CD4-positive, alpha-beta memory T cell (primary cell): ENCODE measurements at regions of chr17 and their contacts with region 1.

Region 1: DNA sequence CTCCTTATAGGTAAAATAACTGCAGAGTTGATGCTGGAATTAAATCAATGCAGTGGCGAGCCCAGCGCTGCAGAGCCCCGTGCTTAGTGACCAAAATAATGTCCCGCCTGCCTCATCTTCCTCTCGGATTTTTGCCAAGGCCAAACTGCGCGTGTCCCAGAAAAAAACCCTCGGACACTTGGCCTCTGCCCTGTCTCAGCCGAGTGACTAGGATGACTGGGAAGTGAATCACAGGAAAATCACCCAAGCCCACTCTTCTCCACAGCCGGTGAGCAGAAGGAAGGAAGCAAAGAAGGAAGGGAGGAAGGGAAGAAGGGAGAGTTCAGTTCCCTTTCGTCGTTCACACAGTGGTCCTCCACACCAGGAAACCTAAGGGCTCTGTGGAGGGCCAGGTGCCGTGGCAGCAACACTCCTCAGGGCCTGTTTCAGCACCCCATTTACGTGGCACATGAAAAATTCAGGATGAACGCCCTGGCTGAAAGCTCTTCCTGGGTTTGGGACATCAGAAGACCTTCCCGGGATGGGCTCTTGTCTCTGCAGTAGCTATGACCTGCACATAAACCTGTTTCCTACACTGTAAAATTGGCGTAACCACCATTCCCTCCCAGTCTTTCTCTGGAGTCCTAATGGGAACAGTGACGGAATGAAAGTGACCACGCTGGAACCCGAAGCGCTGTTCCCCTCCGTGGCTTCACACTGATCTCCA is 25.4 kb upstream of the HOXB13 start:
- DNase-seq: no peak
- H3K4me3 ChIP-seq: no peak overlapping the region
- H3K4me3 Mint-ChIP-seq: peak overlapping the region in 6 of 8 donors; percentile 1 to 70 (median 19)
- H3K27ac ChIP-seq: no peak overlapping the region
- H3K27ac Mint-ChIP-seq: peak overlapping the region in 3 of 7 donors; percentile 8 to 58 (median 51)
- H3K4me1 ChIP-seq: peaks cover 17% of the 10 kb centered on the region
- H3K4me1 Mint-ChIP-seq: peaks cover 0 to 30% (median 21%) of the 10 kb centered on the region in 4 donors
- H3K27me3 ChIP-seq: peaks cover 79% of the 10 kb centered on the region
- H3K27me3 Mint-ChIP-seq: peaks cover 72 to 74% of the 10 kb centered on the region in 2 donors

Region 2: GRCh38 chr17:48610282-48611211 is 143.4 kb before region 1 on chr17 and contains the start of gene HOXB7:
- CTCF ChIA-PET with region 1: no interaction called
- POLR2A ChIA-PET with region 1: no interaction called
- intact Hi-C with region 1: no loop called
- DNase-seq: peak in 2 of 5 donors; percentile 50 to 56
- H3K4me3 ChIP-seq: peak within 1 kb of the TSS; percentile 64 to 76
- H3K4me3 Mint-ChIP-seq: peak within 1 kb of the TSS; percentile 86 to 93 (median 90)
- H3K27ac ChIP-seq: no peak within 1 kb of the TSS
- H3K27ac Mint-ChIP-seq: peak within 1 kb of the TSS in 6 of 7 donors; percentile 13 to 93 (median 69)
- H3K4me1 ChIP-seq: peaks cover 51% of the 10 kb centered on the region
- H3K4me1 Mint-ChIP-seq: peaks cover 23 to 49% (median 34%) of the 10 kb centered on the region in 4 donors
- H3K27me3 ChIP-seq: peaks cover 47% of the 10 kb centered on the region
- H3K27me3 Mint-ChIP-seq: peaks cover 35 to 65% of the 10 kb centered on the region in 2 donors
- total RNA-seq, gene HOXB7: 0.25 TPM in 1 of 2 experiments, not detected in the other

Region 3: GRCh38 chr17:48718761-48719641 is 34.9 kb before region 1 on chr17:
- CTCF ChIA-PET with region 1: interaction called, 4 read pairs
- POLR2A ChIA-PET with region 1: interaction called, 3 read pairs
- intact Hi-C with region 1: loop called (anchors 5 kb)
- DNase-seq: peak in 1 of 5 donors; percentile 30
- H3K4me3 ChIP-seq: no peak overlapping the region
- H3K4me3 Mint-ChIP-seq: peak overlapping the region; percentile 20 to 69 (median 50)
- H3K27ac ChIP-seq: no peak overlapping the region
- H3K27ac Mint-ChIP-seq: peak overlapping the region in 6 of 7 donors; percentile 30 to 93 (median 72)
- H3K4me1 ChIP-seq: peaks cover 27% of the 10 kb centered on the region
- H3K4me1 Mint-ChIP-seq: peaks cover 12 to 50% (median 22%) of the 10 kb centered on the region in 4 donors
- H3K27me3 ChIP-seq: peaks cover 74% of the 10 kb centered on the region
- H3K27me3 Mint-ChIP-seq: peaks cover 68 to 75% of the 10 kb centered on the region in 2 donors

Region 4: GRCh38 chr17:48734333-48735056 is 19.5 kb before region 1 on chr17:
- CTCF ChIA-PET with region 1: no interaction called
- POLR2A ChIA-PET with region 1: no interaction called
- intact Hi-C with region 1: loop called (anchors 2 kb)
- DNase-seq: no peak
- H3K4me3 ChIP-seq: no peak overlapping the region
- H3K4me3 Mint-ChIP-seq: peak overlapping the region in 2 of 8 donors; percentile 10 to 20
- H3K27ac ChIP-seq: no peak overlapping the region
- H3K27ac Mint-ChIP-seq: no peak overlapping the region
- H3K4me1 ChIP-seq: peaks cover 19% of the 10 kb centered on the region
- H3K4me1 Mint-ChIP-seq: peaks cover 11 to 42% (median 21%) of the 10 kb centered on the region in 4 donors
- H3K27me3 ChIP-seq: peaks cover 74% of the 10 kb centered on the region
- H3K27me3 Mint-ChIP-seq: peaks cover 70 to 87% of the 10 kb centered on the region in 2 donors

Region 5: GRCh38 chr17:48773245-48773644 is 19.3 kb after region 1 on chr17:
- CTCF ChIA-PET with region 1: no interaction called
- POLR2A ChIA-PET with region 1: no interaction called
- intact Hi-C with region 1: no loop called
- DNase-seq: no peak
- H3K4me3 ChIP-seq: no peak overlapping the region
- H3K4me3 Mint-ChIP-seq: no peak overlapping the region
- H3K27ac ChIP-seq: no peak overlapping the region
- H3K27ac Mint-ChIP-seq: no peak overlapping the region
- H3K4me1 ChIP-seq: no peaks in the 10 kb centered on the region
- H3K4me1 Mint-ChIP-seq: no peaks in the 10 kb centered on the region
- H3K27me3 ChIP-seq: no peaks in the 10 kb centered on the region
- H3K27me3 Mint-ChIP-seq: peaks cover 34 to 37% of the 10 kb centered on the region in 2 donors

Region 6: DNA sequence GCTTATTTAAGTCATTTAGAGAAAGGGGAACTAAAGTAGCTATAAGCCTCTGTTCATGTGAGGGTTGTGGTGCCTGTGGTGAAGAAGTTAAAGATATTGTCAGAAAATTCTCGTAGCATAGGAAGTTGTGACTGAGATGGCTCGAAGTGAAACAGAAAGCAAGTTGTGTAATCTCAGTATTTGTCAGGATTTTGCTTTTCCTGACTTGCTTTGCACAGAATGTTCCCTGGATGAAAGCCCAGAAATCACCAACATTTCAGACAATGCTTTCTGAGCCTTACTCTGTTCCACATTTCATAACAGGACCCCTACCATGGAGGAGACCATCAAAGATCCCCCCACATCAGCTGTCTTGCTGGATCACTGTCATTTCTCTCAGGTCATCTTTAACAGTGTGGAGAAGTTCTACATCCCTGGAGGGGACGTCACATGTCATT is 87.5 kb after region 1 on chr17:
- CTCF ChIA-PET with region 1: no interaction called
- POLR2A ChIA-PET with region 1: no interaction called
- intact Hi-C with region 1: no loop called
- DNase-seq: peak; percentile 56 to 72 (median 62)
- H3K4me3 ChIP-seq: peak overlapping the region in 1 of 2 donors; percentile 61
- H3K4me3 Mint-ChIP-seq: peak overlapping the region; percentile 73 to 91 (median 82)
- H3K27ac ChIP-seq: peak overlapping the region; percentile 69
- H3K27ac Mint-ChIP-seq: peak overlapping the region; percentile 90 to 97 (median 93)
- H3K4me1 ChIP-seq: peaks cover 61% of the 10 kb centered on the region
- H3K4me1 Mint-ChIP-seq: peaks cover 31 to 64% (median 45%) of the 10 kb centered on the region in 4 donors
- H3K27me3 ChIP-seq: no peaks in the 10 kb centered on the region
- H3K27me3 Mint-ChIP-seq: no peaks in the 10 kb centered on the region